Posterior cingulate gyrus (tissue), 11 donors: ENCODE measurements at regions of chr3 and their contacts with region 1.

Region 1: GRCh38 chr3:120558771-120559241 is 37.3 kb upstream of the NDUFB4 start:
- DNase-seq: peak; percentile 72 to 97 (median 86)

Region 2: GRCh38 chr3:120245386-120245785 is 313.4 kb before region 1 on chr3:
- intact Hi-C with region 1: loop called (anchors 1 kb)
- DNase-seq: no peak

Region 3: DNA sequence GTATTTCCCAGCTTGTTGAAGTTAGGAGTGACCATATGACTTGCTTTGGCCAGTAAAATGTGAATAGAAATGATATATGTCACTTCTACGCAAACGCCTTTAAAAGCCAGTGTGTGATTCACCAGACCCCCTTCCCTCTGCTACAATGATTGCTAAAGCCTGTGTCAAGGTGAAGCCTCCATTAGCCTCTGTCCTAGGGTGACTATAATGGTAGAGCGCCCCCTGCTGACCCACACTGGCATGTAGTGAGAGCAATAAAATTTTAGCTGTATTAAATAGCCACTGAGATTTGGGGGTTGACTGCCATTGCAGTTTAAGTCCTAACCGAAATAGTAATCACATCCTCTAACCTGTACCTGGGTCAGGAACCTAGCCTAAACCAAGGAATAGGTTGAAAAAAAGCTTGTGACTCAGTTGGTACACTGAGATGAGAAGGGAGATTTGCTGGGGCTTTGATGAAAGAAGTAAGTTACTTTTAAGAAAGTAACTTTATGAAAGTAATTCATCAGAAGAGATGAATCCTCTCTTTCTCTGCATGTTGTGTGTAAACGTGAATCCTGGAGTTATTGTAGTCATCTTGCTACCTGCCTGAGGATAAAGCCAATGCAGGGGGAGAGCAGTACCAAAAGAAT is 236.3 kb after region 1 on chr3:
- intact Hi-C with region 1: loop called (anchors 1 kb)
- DNase-seq: peak in 9 of 10 donors; percentile 24 to 95 (median 75)